Naive thymus-derived CD8-positive, alpha-beta T cell (primary cell): ENCODE measurements at regions of chr19 and their contacts with region 1.

Region 1: DNA sequence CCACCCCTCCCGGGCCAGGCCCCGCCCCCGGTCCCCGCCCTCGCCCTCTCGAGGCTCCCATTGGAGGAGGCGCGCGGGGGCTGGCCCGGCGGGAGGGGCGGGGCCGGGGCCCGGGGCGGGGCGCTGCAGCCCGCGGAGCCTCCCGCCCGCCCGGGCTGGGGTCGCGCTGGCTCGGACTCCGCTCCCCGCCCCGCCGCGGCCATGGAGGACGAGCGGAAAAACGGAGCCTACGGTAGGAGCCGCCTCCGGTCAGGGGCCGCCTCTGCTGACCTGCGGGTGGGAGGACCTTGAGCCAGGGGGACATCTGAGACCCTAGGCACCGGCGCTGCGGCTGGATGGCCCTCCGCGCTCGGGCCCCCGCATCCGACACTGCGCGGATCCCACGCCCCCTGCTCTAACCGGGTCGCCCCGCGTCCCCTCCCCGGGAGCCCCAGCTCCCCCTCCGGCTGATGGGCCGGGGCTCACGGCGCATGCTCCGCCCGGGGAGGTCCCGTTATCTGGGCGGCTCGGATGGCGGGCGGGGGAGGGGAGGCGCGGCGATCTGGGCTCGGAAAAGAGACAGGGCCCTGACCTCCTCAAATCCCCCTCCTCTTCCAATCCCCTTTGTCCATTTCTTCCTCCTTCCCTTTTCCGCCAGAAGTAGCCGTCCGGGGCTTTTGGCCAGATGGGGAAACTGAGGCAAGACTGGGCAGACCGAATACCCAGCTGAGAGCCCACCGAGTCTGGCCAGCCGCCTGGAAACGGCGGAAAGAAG is 15.4 kb upstream of the AP1M2 start:
- DNase-seq: peak; percentile 77 to 97 (median 88)
- ATAC-seq: peak; percentile 62 to 70
- H3K4me3 Mint-ChIP-seq: peak overlapping the region; percentile 91 to 100 (median 98)
- H3K27ac Mint-ChIP-seq: peak overlapping the region; percentile 96 to 100 (median 99)
- H3K4me1 Mint-ChIP-seq: peaks cover 15 to 40% (median 29%) of the 10 kb centered on the region in 4 donors
- H3K27me3 Mint-ChIP-seq: no peaks in the 10 kb centered on the region

Region 2: GRCh38 chr19:10565567-10566407 is 36.7 kb before region 1 on chr19 and contains the start of gene KRI1:
- POLR2A ChIA-PET with region 1: interaction called, 33 read pairs
- DNase-seq: peak; percentile 95 to 99 (median 98)
- ATAC-seq: peak; percentile 47 to 52
- H3K4me3 Mint-ChIP-seq: peak within 1 kb of the TSS; percentile 83 to 100 (median 98)
- H3K27ac Mint-ChIP-seq: peak within 1 kb of the TSS; percentile 88 to 99 (median 98)
- H3K4me1 Mint-ChIP-seq: peaks cover 32 to 56% (median 53%) of the 10 kb centered on the region in 4 donors
- H3K27me3 Mint-ChIP-seq: no peaks in the 10 kb centered on the region
- polyA plus RNA-seq, gene KRI1: 12.8 to 46.9 (median 20.9) TPM

Region 3: GRCh38 chr19:10580979-10581631 is 21.4 kb before region 1 on chr19:
- POLR2A ChIA-PET with region 1: interaction called, 36 read pairs
- DNase-seq: peak; percentile 77 to 94 (median 86)
- ATAC-seq: peak; percentile 95 to 98
- H3K4me3 Mint-ChIP-seq: peak overlapping the region in 2 of 10 donors; percentile 3 to 22
- H3K27ac Mint-ChIP-seq: peak overlapping the region in 4 of 10 donors; percentile 3 to 87 (median 62)
- H3K4me1 Mint-ChIP-seq: peaks cover 7 to 15% (median 14%) of the 10 kb centered on the region in 4 donors
- H3K27me3 Mint-ChIP-seq: peaks cover 0 to 2% (median 0%) of the 10 kb centered on the region in 5 donors

Region 4: DNA sequence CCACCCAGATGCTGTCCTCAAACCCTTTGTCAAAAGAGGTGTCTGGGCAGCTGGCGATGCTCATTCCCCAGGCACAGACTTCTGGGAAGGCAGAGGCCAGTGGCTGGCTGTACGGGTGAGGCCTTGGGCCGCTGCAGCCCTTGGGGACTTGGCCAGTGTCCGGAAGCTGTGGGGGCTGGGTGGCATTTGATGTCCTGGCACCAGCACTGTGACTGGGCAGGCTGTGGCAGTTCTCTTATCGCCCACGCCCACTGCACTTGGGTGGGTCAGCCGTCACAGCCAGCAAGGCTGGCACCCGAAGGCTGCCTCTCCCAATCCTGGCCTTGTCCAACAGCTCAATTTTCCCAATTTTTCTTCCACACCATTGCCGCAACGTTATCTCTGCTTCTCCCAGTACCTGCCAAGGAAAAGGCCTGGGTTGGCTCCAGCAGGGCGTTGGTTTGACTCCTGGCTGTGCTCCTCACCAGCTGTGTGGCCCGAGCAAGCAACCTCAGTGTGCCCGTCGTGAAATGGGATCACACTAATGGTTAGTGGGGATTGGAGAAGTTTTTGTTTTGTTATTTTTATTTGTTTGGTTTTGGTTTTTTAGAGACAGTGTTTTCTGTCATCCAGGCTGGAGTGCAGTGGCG is 10.1 kb after region 1 on chr19:
- POLR2A ChIA-PET with region 1: interaction called, 106 read pairs
- DNase-seq: no peak
- ATAC-seq: no peak
- H3K4me3 Mint-ChIP-seq: peak overlapping the region in 4 of 10 donors; percentile 11 to 62 (median 39)
- H3K27ac Mint-ChIP-seq: peak overlapping the region in 9 of 10 donors; percentile 15 to 81 (median 62)
- H3K4me1 Mint-ChIP-seq: peaks cover 9 to 66% (median 48%) of the 10 kb centered on the region in 4 donors
- H3K27me3 Mint-ChIP-seq: no peaks in the 10 kb centered on the region

Region 5: DNA sequence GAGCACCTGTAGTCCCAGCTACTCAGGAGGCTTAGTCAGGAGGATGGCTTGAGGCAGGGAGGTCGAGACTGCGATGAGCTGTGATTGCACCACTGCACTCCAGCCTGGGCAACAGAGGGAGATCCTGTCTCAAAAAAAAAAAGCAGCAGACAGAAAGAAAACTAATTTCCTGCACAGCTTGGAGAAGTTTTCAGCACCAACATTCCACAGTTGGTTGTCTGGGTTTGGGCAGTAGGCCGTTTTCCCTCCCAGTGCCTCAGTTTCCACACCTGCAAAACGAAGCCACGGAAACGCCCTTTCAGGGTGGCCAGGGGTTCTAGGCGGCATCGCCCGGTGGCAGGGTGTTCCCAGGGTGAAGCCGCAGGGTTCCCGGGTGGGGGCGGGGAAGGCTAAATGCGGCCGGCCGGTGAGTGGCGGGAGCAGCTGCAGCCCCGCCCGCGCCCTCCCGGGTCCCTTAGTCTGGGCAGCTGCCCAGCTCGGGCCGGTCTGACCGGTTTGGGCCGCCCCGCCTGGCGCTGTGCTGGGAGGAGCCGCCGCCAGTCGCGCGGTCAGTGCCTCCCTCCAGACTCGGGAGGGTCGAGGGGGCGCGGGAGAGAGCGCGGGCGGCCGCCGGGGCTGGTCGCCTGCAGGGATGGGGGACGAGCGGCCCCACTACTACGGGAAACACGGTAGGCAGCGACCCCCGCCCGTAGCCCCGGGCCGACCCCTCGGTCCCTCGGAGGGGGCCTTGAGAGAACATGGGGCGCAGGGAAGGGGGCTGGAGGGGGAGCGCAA is 22.7 kb after region 1 on chr19 and contains the start of gene SLC44A2:
- POLR2A ChIA-PET with region 1: interaction called, 106 read pairs
- DNase-seq: no peak
- ATAC-seq: peak; percentile 22
- H3K4me3 Mint-ChIP-seq: peak within 1 kb of the TSS in 8 of 10 donors; percentile 39 to 81 (median 66)
- H3K27ac Mint-ChIP-seq: peak within 1 kb of the TSS; percentile 81 to 92 (median 86)
- H3K4me1 Mint-ChIP-seq: peaks cover 22 to 53% (median 48%) of the 10 kb centered on the region in 4 donors
- H3K27me3 Mint-ChIP-seq: no peaks in the 10 kb centered on the region
- polyA plus RNA-seq, gene SLC44A2: 201 to 331 (median 218) TPM

Region 6: DNA sequence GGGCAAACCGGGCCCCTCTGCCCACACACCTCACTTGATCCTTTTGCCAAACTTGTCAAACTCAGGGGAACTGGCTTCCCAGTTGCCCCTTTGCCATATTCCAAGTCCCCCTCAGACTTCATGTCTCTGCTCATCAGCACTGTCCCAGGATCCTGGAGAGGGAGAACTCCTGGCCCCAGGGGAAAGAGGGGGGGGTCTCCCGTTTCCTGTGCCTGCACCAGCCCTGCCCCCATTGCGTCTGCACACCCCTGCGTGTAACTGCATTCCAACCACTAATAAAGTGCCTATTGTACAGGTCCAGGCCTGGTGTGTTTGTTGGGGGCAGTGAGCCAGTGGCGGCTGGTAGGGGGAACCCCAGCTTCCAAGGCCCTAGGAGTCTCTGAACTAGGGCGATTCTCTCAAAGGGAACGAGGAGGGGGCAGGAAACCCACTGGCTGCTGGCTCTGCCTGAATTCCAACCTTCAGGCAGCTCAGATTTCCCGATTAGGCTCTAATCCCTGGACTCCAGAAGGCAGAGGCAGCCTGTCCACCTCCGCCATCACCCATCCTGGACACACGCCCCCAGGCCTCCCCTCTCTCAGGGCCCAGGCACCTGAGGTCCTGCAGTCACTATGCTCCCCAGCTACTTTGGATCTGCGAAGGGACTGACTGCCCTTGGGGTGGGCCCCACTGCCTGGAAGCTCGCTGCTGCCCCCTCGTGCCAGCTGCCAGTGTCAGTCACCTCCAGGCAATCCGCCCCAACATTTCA is 41.9 kb after region 1 on chr19:
- POLR2A ChIA-PET with region 1: interaction called, 84 read pairs
- DNase-seq: peak; percentile 75 to 91 (median 85)
- ATAC-seq: peak; percentile 90 to 95
- H3K4me3 Mint-ChIP-seq: peak overlapping the region in 4 of 10 donors; percentile 40 to 82 (median 54)
- H3K27ac Mint-ChIP-seq: peak overlapping the region; percentile 79 to 95 (median 90)
- H3K4me1 Mint-ChIP-seq: peaks cover 23 to 50% (median 34%) of the 10 kb centered on the region in 4 donors
- H3K27me3 Mint-ChIP-seq: no peaks in the 10 kb centered on the region

Region 7: DNA sequence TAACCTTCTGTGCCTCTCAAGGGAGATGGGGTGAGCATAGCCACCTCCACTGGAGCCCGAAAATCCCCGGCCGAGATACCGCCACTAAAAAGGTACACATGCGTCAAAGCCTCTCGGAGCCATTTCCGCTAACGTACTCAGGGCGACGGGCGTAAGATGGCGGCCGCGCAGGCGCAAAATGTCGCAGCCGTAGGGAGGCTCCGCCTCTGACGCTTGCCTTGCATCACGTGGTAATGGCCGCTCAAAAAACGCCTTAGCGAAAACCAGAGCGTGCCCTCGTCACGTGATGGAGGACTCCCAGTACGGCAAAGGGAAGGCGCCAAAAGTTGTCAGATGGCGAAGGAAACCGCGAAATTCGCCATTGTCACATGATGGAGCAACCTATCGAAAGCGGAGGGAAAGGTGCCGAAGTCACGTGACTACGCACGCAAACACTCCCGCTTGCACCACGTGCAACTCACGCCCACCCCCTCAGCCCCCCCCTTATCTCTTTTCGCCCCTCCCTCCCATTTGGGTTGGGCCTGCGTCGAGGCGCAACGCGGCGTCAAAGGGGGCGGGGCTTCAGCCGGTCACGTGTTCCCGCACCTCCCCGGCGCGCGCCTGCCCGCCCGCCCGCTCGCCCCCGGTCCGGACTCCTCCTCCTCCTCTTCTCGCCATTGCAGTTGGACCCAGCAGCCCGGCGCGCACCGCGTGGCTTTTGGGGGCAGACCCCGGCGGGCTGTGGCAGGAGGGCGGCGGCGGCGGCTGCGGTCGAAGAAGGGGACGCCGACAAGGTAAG is 51.4 kb after region 1 on chr19 and contains the start of gene ILF3:
- POLR2A ChIA-PET with region 1: interaction called, 53 read pairs
- DNase-seq: peak; percentile 97 to 100 (median 100)
- ATAC-seq: peak; percentile 80 to 87
- H3K4me3 Mint-ChIP-seq: peak within 1 kb of the TSS; percentile 93 to 97 (median 96)
- H3K27ac Mint-ChIP-seq: peak within 1 kb of the TSS; percentile 97 to 100 (median 99)
- H3K4me1 Mint-ChIP-seq: peaks cover 16 to 58% (median 44%) of the 10 kb centered on the region in 4 donors
- H3K27me3 Mint-ChIP-seq: peaks cover 0 to 3% (median 0%) of the 10 kb centered on the region in 5 donors
- polyA plus RNA-seq, gene ILF3: 79.6 to 99.1 (median 92.8) TPM

Region 8: GRCh38 chr19:10688545-10689280 is 86.2 kb after region 1 on chr19:
- POLR2A ChIA-PET with region 1: no interaction called
- DNase-seq: no peak
- ATAC-seq: no peak
- H3K4me3 Mint-ChIP-seq: no peak overlapping the region
- H3K27ac Mint-ChIP-seq: peak overlapping the region in 4 of 10 donors; percentile 3 to 78 (median 30)
- H3K4me1 Mint-ChIP-seq: peaks cover 0 to 8% (median 2%) of the 10 kb centered on the region in 4 donors
- H3K27me3 Mint-ChIP-seq: no peaks in the 10 kb centered on the region